ENCODE measurements at regions of chr19 and their contacts with region 1.

Region 1: GRCh38 chr19:23686621-23687423 is at the start of gene ZNF675:
- DNase-seq: peak; percentile 76 to 95 (median 84)
- ATAC-seq: peak; percentile 96
- H3K4me3 ChIP-seq: peak within 1 kb of the TSS; percentile 77
- H3K4me3 Mint-ChIP-seq: peak within 1 kb of the TSS; percentile 100
- H3K27ac ChIP-seq: peak within 1 kb of the TSS; percentile 79 to 82
- H3K27ac Mint-ChIP-seq: peak within 1 kb of the TSS; percentile 99
- H3K4me1 ChIP-seq: peaks cover 19% of the 10 kb centered on the region
- H3K4me1 Mint-ChIP-seq: peaks cover 49% of the 10 kb centered on the region
- H3K27me3 ChIP-seq: no peaks in the 10 kb centered on the region
- H3K27me3 Mint-ChIP-seq: no peaks in the 10 kb centered on the region
- CTCF ChIP-seq: no peak
- total RNA-seq, gene ZNF675: 15.6 to 16.4 TPM

Region 2: DNA sequence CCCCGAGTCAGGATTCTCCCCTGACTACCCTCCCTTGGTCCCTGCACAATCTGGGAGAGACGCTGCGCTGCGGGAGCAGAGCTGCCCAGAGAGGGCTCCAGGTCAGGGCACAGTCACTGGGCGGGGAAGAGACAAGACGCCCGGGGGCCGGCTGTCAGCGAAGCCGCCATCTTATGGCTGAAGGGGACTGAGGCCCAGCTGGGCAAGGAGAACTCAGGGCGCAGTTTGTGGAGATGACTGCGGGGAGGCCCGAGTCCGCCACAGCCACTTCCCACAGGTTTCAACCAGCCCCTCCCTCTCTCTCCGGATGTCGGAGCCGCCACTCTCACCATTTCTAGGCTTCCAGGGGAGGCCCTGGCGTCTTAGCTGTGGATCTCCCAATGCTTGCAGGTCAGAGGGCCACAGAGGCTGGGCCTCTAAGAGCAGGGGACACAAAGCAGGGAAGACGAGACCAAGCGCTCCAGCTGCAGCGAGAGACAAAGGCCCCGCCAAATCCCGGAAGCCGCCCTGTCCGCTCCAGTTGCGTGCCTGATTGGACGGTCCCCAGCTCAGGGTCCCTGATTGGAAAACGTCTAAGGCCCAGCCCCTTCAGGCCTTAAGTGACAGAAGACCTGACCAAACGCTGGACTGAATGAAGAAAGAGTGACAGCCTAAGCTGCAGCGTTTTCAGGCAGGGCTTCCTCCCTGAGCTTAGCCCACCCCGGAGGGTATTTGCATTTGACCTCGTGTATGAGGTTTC is 436.7 kb before region 1 on chr19 and contains the start of gene ZNF724:
- CTCF ChIA-PET with region 1: interaction called, 3 read pairs
- POLR2A ChIA-PET with region 1: interaction called, 10 read pairs
- intact Hi-C with region 1: loop called in 1 of 2 experiments (anchors 10 kb)
- DNase-seq: peak; percentile 78 to 94 (median 82)
- ATAC-seq: peak; percentile 99
- H3K4me3 ChIP-seq: peak within 1 kb of the TSS; percentile 83
- H3K4me3 Mint-ChIP-seq: peak within 1 kb of the TSS; percentile 98
- H3K27ac ChIP-seq: peak within 1 kb of the TSS; percentile 29 to 55
- H3K27ac Mint-ChIP-seq: peak within 1 kb of the TSS; percentile 83
- H3K4me1 ChIP-seq: peaks cover 12% of the 10 kb centered on the region
- H3K4me1 Mint-ChIP-seq: peaks cover 13% of the 10 kb centered on the region
- H3K27me3 ChIP-seq: no peaks in the 10 kb centered on the region
- H3K27me3 Mint-ChIP-seq: no peaks in the 10 kb centered on the region
- CTCF ChIP-seq: no peak
- total RNA-seq, gene ZNF724: 4.2 to 5.5 TPM

Region 3: DNA sequence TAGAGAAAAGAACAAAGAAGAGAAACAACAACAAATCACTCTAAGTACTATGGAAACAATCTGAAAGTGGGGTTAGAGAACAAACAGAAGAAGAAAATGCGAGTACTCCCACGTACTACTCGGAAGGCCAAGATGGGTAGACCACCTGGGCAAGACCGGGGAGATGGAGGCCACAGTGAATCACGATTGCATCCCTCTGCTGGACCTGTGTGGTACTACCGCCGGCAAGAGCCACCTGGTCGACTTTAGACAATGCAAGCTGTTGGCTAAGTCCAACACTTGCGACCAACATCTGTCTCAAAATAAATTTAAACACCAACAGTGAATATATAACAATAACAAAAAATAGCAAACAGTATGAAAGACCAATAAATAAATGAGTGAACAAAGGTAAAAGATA is 246.0 kb before region 1 on chr19:
- CTCF ChIA-PET with region 1: no interaction called
- POLR2A ChIA-PET with region 1: no interaction called
- intact Hi-C with region 1: no loop called
- DNase-seq: peak in 2 of 14 experiments; percentile 7 to 15
- ATAC-seq: no peak
- H3K4me3 ChIP-seq: no peak overlapping the region
- H3K4me3 Mint-ChIP-seq: no peak overlapping the region
- H3K27ac ChIP-seq: no peak overlapping the region
- H3K27ac Mint-ChIP-seq: no peak overlapping the region
- H3K4me1 ChIP-seq: no peaks in the 10 kb centered on the region
- H3K4me1 Mint-ChIP-seq: no peaks in the 10 kb centered on the region
- H3K27me3 ChIP-seq: no peaks in the 10 kb centered on the region
- H3K27me3 Mint-ChIP-seq: no peaks in the 10 kb centered on the region
- CTCF ChIP-seq: peak; percentile 20

Region 4: GRCh38 chr19:23799321-23799720 is 112.5 kb after region 1 on chr19:
- CTCF ChIA-PET with region 1: no interaction called
- POLR2A ChIA-PET with region 1: interaction called, 19 read pairs
- intact Hi-C with region 1: loop called in 1 of 2 experiments (anchors 10 kb)
- DNase-seq: peak; percentile 8 to 88 (median 32)
- ATAC-seq: peak; percentile 93
- H3K4me3 ChIP-seq: peak overlapping the region; percentile 37
- H3K4me3 Mint-ChIP-seq: peak overlapping the region; percentile 88
- H3K27ac ChIP-seq: peak overlapping the region; percentile 29 to 52
- H3K27ac Mint-ChIP-seq: peak overlapping the region; percentile 90
- H3K4me1 ChIP-seq: peaks cover 15% of the 10 kb centered on the region
- H3K4me1 Mint-ChIP-seq: peaks cover 46% of the 10 kb centered on the region
- H3K27me3 ChIP-seq: no peaks in the 10 kb centered on the region
- H3K27me3 Mint-ChIP-seq: no peaks in the 10 kb centered on the region
- CTCF ChIP-seq: no peak

Region 5: GRCh38 chr19:24033301-24033962 is 346.6 kb after region 1 on chr19:
- CTCF ChIA-PET with region 1: no interaction called
- POLR2A ChIA-PET with region 1: interaction called, 33 read pairs
- intact Hi-C with region 1: loop called (anchors 1 to 2 kb)
- DNase-seq: peak; percentile 65 to 92 (median 77)
- ATAC-seq: peak; percentile 99
- H3K4me3 ChIP-seq: peak overlapping the region; percentile 99
- H3K4me3 Mint-ChIP-seq: peak overlapping the region; percentile 100
- H3K27ac ChIP-seq: peak overlapping the region; percentile 66 to 85
- H3K27ac Mint-ChIP-seq: peak overlapping the region; percentile 94
- H3K4me1 ChIP-seq: peaks cover 51% of the 10 kb centered on the region
- H3K4me1 Mint-ChIP-seq: peaks cover 47% of the 10 kb centered on the region
- H3K27me3 ChIP-seq: no peaks in the 10 kb centered on the region
- H3K27me3 Mint-ChIP-seq: no peaks in the 10 kb centered on the region
- CTCF ChIP-seq: no peak